Activated T-helper 2 cell treated with anti-CD3 and anti-CD28 coated beads, Interferon-gamma antibody, Interleukin-2, Interleukin-4, amounts not matched to agents 10 μg/mL and 5 μg/mL and 100 μg/mL, durations not matched to agents 14 hours and 24 hours and 36 hours (primary cell): ENCODE measurements at regions of chr22 and their contacts with region 1.

Region 1: GRCh38 chr22:38941488-38941987 is 15.9 kb upstream of the APOBEC3A start:
- DNase-seq: peak; percentile 36
- H3K4me3 Mint-ChIP-seq: peak overlapping the region; percentile 50
- H3K27ac Mint-ChIP-seq: peak overlapping the region; percentile 84
- H3K4me1 Mint-ChIP-seq: peaks cover 27% of the 10 kb centered on the region
- H3K27me3 Mint-ChIP-seq: peaks cover 36% of the 10 kb centered on the region

Region 2: GRCh38 chr22:38872172-38872830 is 69.2 kb before region 1 on chr22 and contains the start of gene CBX6:
- intact Hi-C with region 1: loop called (anchors 1 kb)
- DNase-seq: peak; percentile 92
- H3K4me3 Mint-ChIP-seq: peak within 1 kb of the TSS; percentile 91
- H3K27ac Mint-ChIP-seq: peak within 1 kb of the TSS; percentile 80
- H3K4me1 Mint-ChIP-seq: peaks cover 36% of the 10 kb centered on the region
- H3K27me3 Mint-ChIP-seq: peaks cover 23% of the 10 kb centered on the region
- total RNA-seq, gene CBX6: 117 and 120 TPM in 2 replicates

Region 3: DNA sequence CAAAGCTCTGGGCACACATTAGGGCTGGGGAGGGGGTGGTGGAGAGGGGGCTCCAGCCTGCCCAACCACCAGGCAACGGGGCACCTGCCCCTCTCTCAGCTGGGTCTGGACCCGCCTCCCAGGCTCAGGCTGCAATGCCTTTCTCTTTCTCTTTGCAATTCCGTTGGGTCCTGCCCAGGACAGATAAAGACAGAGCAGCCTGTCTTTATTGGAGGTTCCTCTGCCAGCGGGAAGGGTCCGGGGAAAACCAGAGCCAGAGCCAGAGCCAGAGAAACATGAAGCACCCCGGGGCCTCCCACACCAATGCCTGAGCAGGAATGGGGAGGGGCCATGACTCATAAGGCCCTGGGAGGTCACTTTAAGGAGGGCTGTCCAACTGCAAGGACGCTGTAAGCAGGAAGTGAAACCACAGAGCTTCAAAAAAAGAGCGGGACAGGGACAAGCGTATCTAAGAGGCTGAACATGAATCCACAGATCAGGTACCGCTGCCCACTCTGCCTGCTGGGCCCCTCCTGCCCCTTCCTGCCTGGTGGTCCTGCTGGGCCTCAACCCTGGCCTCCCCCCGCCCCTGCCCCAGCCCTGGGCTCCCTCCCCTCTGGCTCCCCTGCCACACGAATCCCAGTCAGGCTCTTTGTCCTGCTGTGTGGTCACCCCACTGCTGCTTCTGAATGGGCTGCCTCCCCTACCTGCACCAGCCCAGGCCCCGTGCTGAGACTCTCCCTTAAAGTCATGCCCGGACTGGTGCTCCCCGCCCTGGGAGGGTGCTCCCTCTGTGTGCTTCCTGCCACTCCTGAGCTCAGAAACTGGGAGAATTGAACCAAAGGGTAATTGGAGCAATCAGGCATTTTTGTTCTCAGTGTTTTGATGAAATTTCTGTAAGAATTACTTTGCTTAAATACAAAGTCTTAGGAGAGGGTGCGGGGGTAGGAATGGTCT is 40.7 kb after region 1 on chr22 and contains the start of gene APOBEC3B:
- intact Hi-C with region 1: loop called (anchors 1 kb)
- DNase-seq: peak; percentile 76
- H3K4me3 Mint-ChIP-seq: peak within 1 kb of the TSS; percentile 84
- H3K27ac Mint-ChIP-seq: peak within 1 kb of the TSS; percentile 95
- H3K4me1 Mint-ChIP-seq: peaks cover 41% of the 10 kb centered on the region
- H3K27me3 Mint-ChIP-seq: peaks cover 2% of the 10 kb centered on the region
- total RNA-seq, gene APOBEC3B: 17.0 and 17.2 TPM in 2 replicates

Region 4: GRCh38 chr22:39117585-39118191 is 176.2 kb after region 1 on chr22:
- intact Hi-C with region 1: loop called (anchors 5 kb)
- DNase-seq: peak; percentile 58
- H3K4me3 Mint-ChIP-seq: peak overlapping the region; percentile 41
- H3K27ac Mint-ChIP-seq: peak overlapping the region; percentile 90
- H3K4me1 Mint-ChIP-seq: peaks cover 50% of the 10 kb centered on the region
- H3K27me3 Mint-ChIP-seq: no peaks in the 10 kb centered on the region